Head of caudate nucleus (tissue), 42 donors: ENCODE measurements at regions of chr3 and their contacts with region 1.

Region 1: DNA sequence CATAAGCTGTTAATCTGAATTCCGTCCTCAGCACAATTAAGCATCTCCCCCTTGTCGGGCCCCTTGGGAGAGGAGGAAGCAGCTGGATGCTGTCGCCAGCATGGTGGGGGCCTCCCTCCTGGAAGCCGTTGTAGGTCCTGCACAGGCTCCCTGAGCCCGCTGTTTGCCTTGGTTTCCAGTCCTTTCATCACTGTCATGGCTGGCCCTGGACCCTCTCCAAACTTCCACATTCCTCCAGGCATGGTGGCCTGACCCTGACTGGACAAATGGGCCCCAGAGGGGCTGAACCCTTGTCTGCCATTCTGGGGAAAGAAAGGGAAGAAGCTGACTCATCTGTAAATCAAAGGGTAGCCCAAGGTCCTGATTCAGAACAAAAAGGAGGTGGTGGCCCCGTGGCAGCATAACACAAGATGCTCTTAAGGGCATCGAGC is 300.5 kb upstream of the LRRFIP2 start:
- DNase-seq: no peak

Region 2: DNA sequence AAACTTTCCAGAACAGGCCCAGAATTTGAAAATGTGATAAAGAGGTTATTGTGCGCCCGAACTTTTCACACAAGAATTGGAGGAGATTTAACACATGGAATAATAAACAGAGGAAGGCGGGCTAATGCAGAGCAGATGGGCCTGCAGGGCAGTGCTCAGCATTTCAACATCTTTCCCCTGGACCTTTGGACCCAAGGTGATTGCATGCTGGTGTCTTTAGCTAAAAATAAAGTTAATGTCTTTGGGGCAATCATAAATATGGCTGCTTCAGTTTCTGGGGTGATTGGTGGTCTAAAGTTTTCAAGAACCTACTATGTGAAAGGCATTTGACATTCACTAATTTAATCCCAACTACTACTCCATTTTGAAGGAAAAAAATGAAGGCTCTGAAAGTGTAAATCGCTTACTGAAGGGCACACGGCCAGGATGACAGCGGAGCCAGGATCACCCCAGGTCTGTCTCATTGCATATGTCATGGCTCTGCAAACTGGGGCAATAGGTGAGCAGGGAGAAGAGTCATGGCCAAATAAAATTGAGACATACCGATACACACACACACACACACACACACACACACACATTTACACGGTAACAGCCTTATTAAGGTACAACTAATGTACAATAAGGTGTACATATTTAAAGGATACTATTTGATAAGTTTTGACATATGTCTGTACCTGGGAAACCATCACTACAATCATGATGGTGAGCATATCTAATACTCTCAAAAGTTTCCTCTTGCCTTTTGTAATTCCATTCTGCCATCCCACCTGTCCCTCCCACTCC is 57.4 kb before region 1 on chr3:
- intact Hi-C with region 1: no loop called
- DNase-seq: no peak

Region 3: GRCh38 chr3:37537914-37538691 is 63.2 kb after region 1 on chr3:
- intact Hi-C with region 1: loop called (anchors 10 kb)
- DNase-seq: no peak

Region 4: GRCh38 chr3:37700466-37701248 is 225.7 kb after region 1 on chr3:
- intact Hi-C with region 1: no loop called
- DNase-seq: no peak